Gastrocnemius medialis (tissue), 4 donors: ENCODE measurements at regions of chr3 and their contacts with region 1.

Region 1: GRCh38 chr3:136036306-136036705 is 70.8 kb downstream of the PPP2R3A start:
- DNase-seq: no peak
- ATAC-seq: no peak
- H3K4me3 ChIP-seq: no peak overlapping the region
- H3K27ac ChIP-seq: peak overlapping the region in 1 of 4 donors; percentile 54
- H3K4me1 ChIP-seq: peaks cover 5 to 48% of the 10 kb centered on the region in 2 donors
- H3K27me3 ChIP-seq: no peaks in the 10 kb centered on the region
- CTCF ChIP-seq: no peak
- POLR2A ChIP-seq: no peak

Region 2: DNA sequence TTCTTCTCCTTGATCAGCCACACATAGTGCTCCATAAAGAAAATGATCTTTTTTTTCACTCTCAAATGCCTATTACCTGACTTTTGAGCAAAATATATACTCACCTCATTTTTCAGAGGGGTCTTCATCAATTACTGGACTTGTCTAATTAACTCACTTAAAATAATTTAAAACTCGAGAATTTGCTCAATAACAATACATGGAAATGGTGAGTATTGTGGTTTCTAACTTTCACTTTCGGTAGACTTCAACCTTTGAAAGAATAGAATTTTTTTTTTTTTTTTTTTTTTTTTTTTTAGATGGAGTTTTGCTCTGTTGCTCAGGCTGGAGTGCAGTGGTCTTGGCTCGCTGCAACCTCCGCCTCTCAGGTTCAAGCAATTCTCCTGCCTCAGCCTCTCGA is 1259.0 kb before region 1 on chr3:
- in situ Hi-C with region 1: loop called in 2 of 4 experiments (anchors 10 to 25 kb)
- intact Hi-C with region 1: no loop called
- DNase-seq: no peak
- ATAC-seq: no peak
- H3K4me3 ChIP-seq: no peak overlapping the region
- H3K27ac ChIP-seq: no peak overlapping the region
- H3K4me1 ChIP-seq: no peaks in the 10 kb centered on the region
- H3K27me3 ChIP-seq: no peaks in the 10 kb centered on the region
- CTCF ChIP-seq: no peak
- POLR2A ChIP-seq: no peak

Region 3: DNA sequence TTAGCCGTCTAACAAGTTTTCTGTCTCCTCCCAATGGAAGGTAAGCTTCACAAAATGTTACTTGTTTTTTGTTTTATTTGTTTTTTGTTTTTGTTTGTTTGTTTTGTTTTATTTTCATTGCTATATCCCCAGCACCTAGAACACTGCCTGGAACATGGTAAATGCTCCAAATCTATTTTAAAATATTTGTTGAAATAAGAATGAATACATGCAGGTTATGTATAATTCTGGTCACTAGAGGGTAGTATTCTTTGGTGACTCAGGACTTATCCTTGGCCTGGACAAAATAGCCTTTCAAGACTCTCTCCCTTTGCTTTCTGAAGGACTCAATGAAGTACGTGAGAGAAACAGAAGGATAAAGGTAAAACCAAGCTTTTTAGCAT is 117.7 kb before region 1 on chr3:
- in situ Hi-C with region 1: loop called (anchors 5 kb)
- intact Hi-C with region 1: no loop called
- DNase-seq: no peak
- ATAC-seq: peak; percentile 80 to 90
- H3K4me3 ChIP-seq: no peak overlapping the region
- H3K27ac ChIP-seq: peak overlapping the region in 1 of 4 donors; percentile 65
- H3K4me1 ChIP-seq: peaks cover 0 to 15% of the 10 kb centered on the region in 2 donors
- H3K27me3 ChIP-seq: no peaks in the 10 kb centered on the region
- CTCF ChIP-seq: peak; percentile 23 to 61 (median 56)
- POLR2A ChIP-seq: no peak

Region 4: DNA sequence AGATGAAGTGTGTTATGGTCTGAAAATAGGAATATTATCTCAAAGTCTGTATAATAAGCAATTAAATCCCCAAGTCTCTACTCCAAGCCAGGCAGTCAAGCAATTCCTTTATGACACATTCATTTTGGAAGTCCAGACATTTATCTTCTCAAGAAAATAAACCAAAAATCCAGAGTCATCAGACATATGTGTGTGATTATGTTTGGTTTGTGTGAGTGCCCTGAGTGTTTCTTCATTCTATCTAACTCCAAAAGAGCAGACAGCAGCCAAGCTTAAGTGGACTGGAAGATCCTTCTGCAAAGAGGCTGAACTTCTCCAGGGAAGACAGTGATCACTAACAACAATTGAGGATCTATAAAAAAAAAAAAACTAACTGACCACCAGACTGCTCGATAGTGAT is 476.1 kb after region 1 on chr3:
- in situ Hi-C with region 1: no loop called
- intact Hi-C with region 1: no loop called
- DNase-seq: no peak
- ATAC-seq: no peak
- H3K4me3 ChIP-seq: no peak overlapping the region
- H3K27ac ChIP-seq: no peak overlapping the region
- H3K4me1 ChIP-seq: peaks cover 3 to 8% of the 10 kb centered on the region in 2 donors
- H3K27me3 ChIP-seq: no peaks in the 10 kb centered on the region
- CTCF ChIP-seq: no peak
- POLR2A ChIP-seq: no peak